ENCODE measurements at regions of chr4 and their contacts with region 1.

Region 1: DNA sequence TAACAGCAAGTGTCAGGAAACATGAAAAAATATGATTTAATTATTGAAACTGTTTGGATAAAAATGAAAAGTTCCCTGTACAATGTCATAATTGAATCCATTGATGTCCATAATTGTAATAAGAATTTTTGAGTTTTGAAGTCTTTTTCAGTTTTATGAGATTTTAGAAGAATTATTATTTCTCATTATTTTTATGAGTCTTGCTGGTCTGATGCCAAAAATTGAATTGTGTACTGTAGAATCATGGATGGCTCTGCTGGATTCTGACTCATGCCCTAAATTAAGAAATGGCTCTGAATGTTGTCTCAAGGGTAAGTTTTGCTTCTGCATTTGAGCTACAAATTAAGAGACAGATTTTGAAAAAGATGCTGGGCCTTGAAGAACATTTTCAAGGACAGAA is 132.8 kb upstream of the MAP9 start:
- DNase-seq: no peak
- ATAC-seq: no peak
- H3K4me3 ChIP-seq: no peak overlapping the region
- H3K27ac ChIP-seq: no peak overlapping the region
- H3K4me1 ChIP-seq: no peaks in the 10 kb centered on the region
- H3K27me3 ChIP-seq: no peaks in the 10 kb centered on the region
- CTCF ChIP-seq: no peak
- EP300 ChIP-seq: no peak
- POLR2A ChIP-seq: no peak
- RAD21 ChIP-seq: no peak

Region 2: GRCh38 chr4:155473420-155474095 is 36.0 kb before region 1 on chr4:
- CTCF ChIA-PET with region 1: no interaction called
- POLR2A ChIA-PET with region 1: no interaction called
- in situ Hi-C with region 1: no loop called
- intact Hi-C with region 1: no loop called
- DNase-seq: no peak
- ATAC-seq: no peak
- H3K4me3 ChIP-seq: no peak overlapping the region
- H3K27ac ChIP-seq: no peak overlapping the region
- H3K4me1 ChIP-seq: no peaks in the 10 kb centered on the region
- H3K27me3 ChIP-seq: no peaks in the 10 kb centered on the region; a peak in 1 of 5 replicates
- CTCF ChIP-seq: no peak
- EP300 ChIP-seq: no peak
- POLR2A ChIP-seq: no peak
- RAD21 ChIP-seq: no peak

Region 3: GRCh38 chr4:155522201-155522600 is 12.6 kb after region 1 on chr4:
- CTCF ChIA-PET with region 1: no interaction called
- POLR2A ChIA-PET with region 1: no interaction called
- in situ Hi-C with region 1: no loop called
- intact Hi-C with region 1: no loop called
- DNase-seq: no peak
- ATAC-seq: no peak
- H3K4me3 ChIP-seq: no peak overlapping the region
- H3K27ac ChIP-seq: no peak overlapping the region
- H3K4me1 ChIP-seq: no peaks in the 10 kb centered on the region
- H3K27me3 ChIP-seq: no peaks in the 10 kb centered on the region
- CTCF ChIP-seq: no peak
- EP300 ChIP-seq: no peak
- POLR2A ChIP-seq: no peak
- RAD21 ChIP-seq: no peak

Region 4: GRCh38 chr4:155532373-155533085 is 23.0 kb after region 1 on chr4:
- CTCF ChIA-PET with region 1: no interaction called
- POLR2A ChIA-PET with region 1: no interaction called
- in situ Hi-C with region 1: no loop called
- intact Hi-C with region 1: loop called (anchors 1 kb)
- DNase-seq: no peak
- ATAC-seq: no peak
- H3K4me3 ChIP-seq: no peak overlapping the region
- H3K27ac ChIP-seq: no peak overlapping the region
- H3K4me1 ChIP-seq: no peaks in the 10 kb centered on the region
- H3K27me3 ChIP-seq: no peaks in the 10 kb centered on the region
- CTCF ChIP-seq: no peak
- EP300 ChIP-seq: no peak
- POLR2A ChIP-seq: no peak
- RAD21 ChIP-seq: no peak